Activated B cell treated with CpG ODN at 0.5 μM for 24 hours (primary cell): ENCODE measurements at regions of chr2 and their contacts with region 1.

Region 1: GRCh38 chr2:152694161-152694661 is 23.1 kb downstream of the PRPF40A start:
- DNase-seq: no peak
- ATAC-seq: peak; percentile 34
- H3K4me3 Mint-ChIP-seq: peak overlapping the region; percentile 55
- H3K27ac Mint-ChIP-seq: peak overlapping the region; percentile 65
- H3K4me1 Mint-ChIP-seq: peaks cover 34% of the 10 kb centered on the region
- H3K27me3 Mint-ChIP-seq: no peaks in the 10 kb centered on the region
- CTCF ChIP-seq: no peak

Region 2: DNA sequence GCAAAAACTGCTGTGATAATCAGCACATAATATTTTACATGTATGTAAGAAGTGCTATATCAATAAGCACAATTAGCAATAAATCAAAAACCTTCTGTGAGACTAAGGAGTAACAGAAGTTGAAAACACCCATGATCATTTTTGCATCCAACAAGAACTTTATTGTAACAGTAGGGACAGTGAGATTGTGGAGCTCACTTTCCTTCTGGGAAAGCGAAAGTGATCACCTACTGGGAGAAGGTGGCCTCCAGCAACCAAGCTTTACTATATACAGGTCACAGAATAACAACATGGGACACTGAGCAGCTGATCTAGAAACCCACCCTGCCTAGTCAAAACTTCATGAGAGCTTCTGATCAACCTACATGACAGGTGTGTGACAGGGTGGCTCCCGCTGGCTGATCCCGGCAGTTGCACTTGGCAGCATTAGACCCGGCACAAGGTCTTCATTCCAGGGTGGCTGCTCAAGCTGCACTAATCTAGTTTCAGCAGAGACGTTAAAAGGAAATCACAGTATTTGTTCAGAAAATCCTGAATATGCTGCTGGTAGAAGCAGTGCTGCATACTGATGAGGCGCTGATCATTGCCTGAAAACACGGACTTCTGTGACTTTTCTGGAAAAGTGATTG is 802.5 kb before region 1 on chr2:
- CTCF ChIA-PET with region 1: no interaction called
- POLR2A ChIA-PET with region 1: no interaction called
- intact Hi-C with region 1: no loop called
- DNase-seq: no peak
- ATAC-seq: no peak
- H3K4me3 Mint-ChIP-seq: no peak overlapping the region
- H3K27ac Mint-ChIP-seq: no peak overlapping the region
- H3K4me1 Mint-ChIP-seq: peaks cover under 1% of the 10 kb centered on the region
- H3K27me3 Mint-ChIP-seq: no peaks in the 10 kb centered on the region
- CTCF ChIP-seq: no peak

Region 3: DNA sequence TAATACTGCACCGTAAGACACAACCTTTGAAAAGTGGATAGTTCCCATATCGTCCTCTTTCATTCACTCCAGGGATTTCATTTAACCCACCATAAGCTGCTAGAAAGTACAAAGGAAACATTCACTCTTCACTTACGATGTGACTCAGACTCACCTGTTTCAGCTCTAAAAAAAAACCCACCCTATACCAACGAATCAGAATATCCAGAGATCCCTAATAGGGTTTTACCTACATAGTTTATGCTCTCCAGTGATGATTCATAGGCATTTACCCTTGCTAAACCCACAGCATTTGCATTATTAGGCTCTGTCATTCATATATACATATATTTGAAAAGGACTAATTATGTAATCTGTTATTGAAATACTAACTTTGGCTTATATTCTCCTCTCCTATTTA is 37.2 kb before region 1 on chr2:
- CTCF ChIA-PET with region 1: no interaction called
- POLR2A ChIA-PET with region 1: no interaction called
- intact Hi-C with region 1: loop called (anchors 5 kb)
- DNase-seq: no peak
- ATAC-seq: peak; percentile 28
- H3K4me3 Mint-ChIP-seq: no peak overlapping the region
- H3K27ac Mint-ChIP-seq: peak overlapping the region; percentile 50
- H3K4me1 Mint-ChIP-seq: peaks cover 4% of the 10 kb centered on the region
- H3K27me3 Mint-ChIP-seq: no peaks in the 10 kb centered on the region
- CTCF ChIP-seq: no peak

Region 4: GRCh38 chr2:152682663-152683062 is 11.5 kb before region 1 on chr2:
- CTCF ChIA-PET with region 1: no interaction called
- POLR2A ChIA-PET with region 1: no interaction called
- intact Hi-C with region 1: loop called (anchors 2 kb)
- DNase-seq: no peak
- ATAC-seq: no peak
- H3K4me3 Mint-ChIP-seq: no peak overlapping the region
- H3K27ac Mint-ChIP-seq: no peak overlapping the region
- H3K4me1 Mint-ChIP-seq: no peaks in the 10 kb centered on the region
- H3K27me3 Mint-ChIP-seq: no peaks in the 10 kb centered on the region
- CTCF ChIP-seq: no peak

Region 5: GRCh38 chr2:152710713-152711112 is 16.5 kb after region 1 on chr2:
- CTCF ChIA-PET with region 1: no interaction called
- POLR2A ChIA-PET with region 1: no interaction called
- intact Hi-C with region 1: loop called (anchors 2 kb)
- DNase-seq: no peak
- ATAC-seq: no peak
- H3K4me3 Mint-ChIP-seq: no peak overlapping the region
- H3K27ac Mint-ChIP-seq: no peak overlapping the region
- H3K4me1 Mint-ChIP-seq: peaks cover 33% of the 10 kb centered on the region
- H3K27me3 Mint-ChIP-seq: no peaks in the 10 kb centered on the region
- CTCF ChIP-seq: no peak

Region 6: DNA sequence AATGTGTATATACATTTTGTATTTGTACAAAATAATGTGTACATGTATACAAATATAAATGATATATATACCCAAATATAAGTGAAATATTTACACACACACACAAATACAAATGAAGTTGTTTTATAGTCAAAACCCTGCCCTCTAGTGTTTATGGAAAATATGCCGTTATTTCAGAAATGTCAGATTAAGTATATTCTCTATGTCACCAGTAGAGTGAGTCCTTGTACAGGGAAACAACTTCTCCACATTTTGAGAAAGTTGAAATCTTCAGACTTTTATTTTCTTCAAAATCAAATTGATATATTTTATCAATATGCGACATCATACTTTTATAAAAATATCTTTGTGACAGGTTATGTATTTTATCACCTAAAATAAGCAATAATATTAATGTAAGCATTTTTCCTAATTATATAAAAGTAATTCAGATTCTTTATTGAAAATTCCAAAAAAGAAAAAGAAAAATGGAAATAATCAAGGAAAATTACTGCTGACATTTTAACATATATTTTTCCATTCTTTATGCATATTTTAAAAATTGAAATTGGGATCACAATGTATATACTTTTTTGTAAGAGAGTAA is 46.6 kb after region 1 on chr2:
- CTCF ChIA-PET with region 1: no interaction called
- POLR2A ChIA-PET with region 1: no interaction called
- intact Hi-C with region 1: no loop called
- DNase-seq: no peak
- ATAC-seq: peak; percentile 79
- H3K4me3 Mint-ChIP-seq: no peak overlapping the region
- H3K27ac Mint-ChIP-seq: no peak overlapping the region
- H3K4me1 Mint-ChIP-seq: peaks cover 2% of the 10 kb centered on the region
- H3K27me3 Mint-ChIP-seq: no peaks in the 10 kb centered on the region
- CTCF ChIP-seq: peak; percentile 54